ENCODE measurements at regions of chr1 and their contacts with region 1.

Region 1: GRCh38 chr1:20633190-20634064 is at the start of gene PINK1:
- DNase-seq: peak; percentile 53
- ATAC-seq: peak; percentile 88
- H3K4me3 ChIP-seq: peak within 1 kb of the TSS; percentile 84
- H3K27ac ChIP-seq: peak within 1 kb of the TSS; percentile 66
- H3K4me1 ChIP-seq: no peaks in the 10 kb centered on the region
- H3K27me3 ChIP-seq: 0 out of 2 replicates have a peak, but pooled peaks cover 4% of the 10 kb centered on the region
- CTCF ChIP-seq: peak; percentile 98
- POLR2A ChIP-seq: 0 out of 2 replicates have a peak, but pooled peaks have one; percentile 36
- RAD21 ChIP-seq: peak; percentile 84
- total RNA-seq, gene PINK1: 52.9 and 55.3 TPM in 2 replicates

Region 2: GRCh38 chr1:20521960-20522861 is 111.2 kb before region 1 on chr1:
- CTCF ChIA-PET with region 1: interaction called, 3 read pairs
- POLR2A ChIA-PET with region 1: no interaction called
- dilution Hi-C with region 1: no loop called
- in situ Hi-C with region 1: loop called (anchors 5 kb)
- intact Hi-C with region 1: loop called (anchors 1 kb)
- DNase-seq: peak; percentile 74
- ATAC-seq: peak; percentile 99
- H3K4me3 ChIP-seq: no peak overlapping the region; the same call in 1 of the 2 replicates
- H3K27ac ChIP-seq: no peak overlapping the region
- H3K4me1 ChIP-seq: no peaks in the 10 kb centered on the region
- H3K27me3 ChIP-seq: peaks cover 22% of the 10 kb centered on the region
- CTCF ChIP-seq: peak; percentile 97
- POLR2A ChIP-seq: 0 out of 2 replicates have a peak, but pooled peaks have one; percentile 29
- RAD21 ChIP-seq: peak; percentile 97

Region 3: DNA sequence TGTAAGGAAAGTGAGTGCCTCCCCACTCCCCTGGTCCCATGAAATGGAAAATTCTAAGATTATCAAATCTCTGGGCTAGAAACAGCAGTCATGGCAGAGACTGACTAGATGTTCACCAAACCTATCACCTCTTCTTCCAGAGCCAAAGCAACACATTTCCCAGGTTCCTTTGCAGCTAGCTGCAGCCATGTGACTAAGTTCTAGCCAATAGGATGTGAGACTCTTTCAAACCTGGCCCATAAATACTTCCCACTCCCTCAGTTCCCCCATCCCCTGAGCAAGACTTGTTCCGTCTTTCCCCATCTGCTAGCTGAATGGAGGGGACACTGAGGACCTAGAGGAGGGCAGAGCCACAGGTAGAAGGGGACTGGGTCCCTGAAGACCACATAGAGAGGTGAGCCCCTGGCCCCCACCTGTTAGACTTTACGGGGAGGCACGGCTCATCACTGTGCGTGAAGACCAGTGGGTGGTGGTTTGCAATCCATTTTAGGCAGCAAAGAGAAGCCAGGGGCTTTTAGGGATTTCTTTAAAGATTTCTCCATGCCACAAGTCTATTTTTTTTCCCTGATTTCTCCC is 63.8 kb before region 1 on chr1:
- CTCF ChIA-PET with region 1: interaction called, 25 read pairs
- POLR2A ChIA-PET with region 1: interaction called, 4 read pairs
- dilution Hi-C with region 1: no loop called
- in situ Hi-C with region 1: loop called (anchors 5 kb)
- intact Hi-C with region 1: loop called (anchors 1 kb)
- DNase-seq: no peak
- ATAC-seq: no peak
- H3K4me3 ChIP-seq: no peak overlapping the region
- H3K27ac ChIP-seq: no peak overlapping the region
- H3K4me1 ChIP-seq: no peaks in the 10 kb centered on the region
- H3K27me3 ChIP-seq: peaks cover 28% of the 10 kb centered on the region
- CTCF ChIP-seq: no peak
- POLR2A ChIP-seq: no peak
- RAD21 ChIP-seq: no peak

Region 4: DNA sequence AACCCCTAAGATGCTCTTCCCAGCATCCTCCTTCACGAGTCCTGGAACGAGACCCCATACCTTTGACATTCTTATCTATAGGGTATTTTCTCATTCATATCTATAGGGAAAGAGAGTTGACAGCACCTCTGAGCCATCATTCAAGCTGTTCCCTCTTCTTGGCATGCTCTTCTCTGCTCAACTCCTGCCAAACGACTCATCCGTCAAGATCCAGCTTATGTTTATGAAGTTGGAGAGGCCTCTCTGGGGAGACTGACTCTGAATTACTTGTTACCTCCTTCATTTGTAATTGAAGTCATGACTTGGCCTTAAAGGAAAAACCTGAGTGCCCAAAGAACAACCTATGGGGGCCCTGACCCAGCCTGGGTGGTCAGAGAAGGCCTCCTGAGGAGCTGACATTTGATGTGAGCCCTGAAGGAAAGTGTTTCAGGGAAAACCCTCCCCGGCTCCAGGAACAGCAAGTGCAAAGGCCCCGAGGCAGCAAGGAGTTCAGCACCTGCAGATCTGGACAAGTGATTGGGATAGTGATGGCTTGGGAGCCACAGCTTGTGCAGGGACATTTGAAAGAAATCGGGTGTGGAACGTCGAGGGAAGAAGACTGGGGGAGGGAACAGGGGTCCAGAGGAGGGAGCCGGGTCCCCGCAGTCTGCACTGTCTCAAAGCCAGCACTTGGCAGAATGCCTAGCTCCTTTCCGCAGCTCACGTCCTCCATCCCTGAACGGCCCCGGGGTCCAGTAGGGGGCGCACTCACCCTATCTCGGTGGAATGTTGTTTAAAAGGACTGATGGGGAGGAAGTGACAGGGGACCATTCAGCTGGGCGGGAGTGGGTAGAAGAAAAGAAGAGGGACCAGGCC is 58.5 kb before region 1 on chr1:
- CTCF ChIA-PET with region 1: interaction called, 25 read pairs
- POLR2A ChIA-PET with region 1: interaction called, 11 read pairs
- dilution Hi-C with region 1: no loop called
- in situ Hi-C with region 1: loop called (anchors 5 kb)
- intact Hi-C with region 1: loop called (anchors 1 kb)
- DNase-seq: peak; percentile 75
- ATAC-seq: peak; percentile 91
- H3K4me3 ChIP-seq: no peak overlapping the region
- H3K27ac ChIP-seq: no peak overlapping the region
- H3K4me1 ChIP-seq: no peaks in the 10 kb centered on the region; the same call in 1 of the 2 replicates
- H3K27me3 ChIP-seq: peaks cover 20% of the 10 kb centered on the region
- CTCF ChIP-seq: peak; percentile 93
- POLR2A ChIP-seq: no peak
- RAD21 ChIP-seq: peak; percentile 90